ENCODE measurements at regions of chr1 and their contacts with region 1.

Region 1: GRCh38 chr1:95233737-95234500 is at the start of gene RWDD3:
- DNase-seq: peak; percentile 95 to 97 (median 96)
- ATAC-seq: peak; percentile 94 to 96 (median 95)
- H3K4me3 ChIP-seq: peak within 1 kb of the TSS; percentile 73 to 95 (median 88)
- H3K27ac ChIP-seq: peak within 1 kb of the TSS; percentile 76 to 97 (median 93)
- H3K4me1 ChIP-seq: peaks cover 0 to 81% (median 46%) of the 10 kb centered on the region in 12 donors
- H3K27me3 ChIP-seq: no peaks in the 10 kb centered on the region
- CTCF ChIP-seq: peak; percentile 67 to 99 (median 96)
- POLR2A ChIP-seq: peak in 1 of 2 donors; percentile 73
- total RNA-seq, gene RWDD3: 8.9 to 24.8 (median 14.8) TPM

Region 2: DNA sequence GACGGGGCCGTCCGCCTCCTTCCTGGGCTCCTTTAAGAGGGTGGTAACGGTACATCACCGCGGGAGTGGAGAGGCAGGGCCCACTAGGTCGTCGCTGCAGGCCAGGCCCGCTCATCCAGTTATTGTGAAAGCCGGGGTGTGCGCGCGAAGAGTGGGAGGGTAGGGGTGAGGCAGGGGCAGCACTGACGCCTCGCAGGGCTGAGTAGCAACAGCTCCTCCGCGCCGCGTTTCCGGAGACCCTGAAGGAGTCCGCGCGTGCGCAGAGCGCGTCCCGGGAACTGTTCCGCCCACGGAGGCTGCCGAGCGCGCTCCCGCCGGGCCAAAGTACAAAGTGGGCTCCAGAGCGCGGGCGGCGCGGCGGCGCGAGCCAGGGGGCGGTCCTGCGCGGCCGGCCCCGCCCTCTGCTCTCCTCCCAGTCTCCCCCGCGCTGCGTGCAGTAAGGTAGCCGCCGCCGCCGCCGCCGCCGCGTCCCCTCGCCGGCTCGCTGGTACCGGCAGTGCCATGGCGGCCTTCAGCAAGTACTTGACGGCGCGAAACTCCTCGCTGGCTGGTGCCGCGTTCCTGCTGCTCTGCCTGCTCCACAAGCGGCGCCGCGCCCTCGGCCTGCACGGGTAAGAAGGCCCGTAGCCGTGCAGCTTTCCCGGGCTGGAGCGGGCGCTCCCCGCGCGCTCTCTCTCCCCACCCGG is 815.8 kb before region 1 on chr1 and contains the start of gene ABCD3:
- intact Hi-C with region 1: loop called in 1 of 10 experiments (anchors 5 kb)
- DNase-seq: peak; percentile 98 to 99 (median 99)
- ATAC-seq: peak; percentile 92 to 98 (median 96)
- H3K4me3 ChIP-seq: peak within 1 kb of the TSS; percentile 63 to 99 (median 86)
- H3K27ac ChIP-seq: peak within 1 kb of the TSS; percentile 81 to 97 (median 94)
- H3K4me1 ChIP-seq: peaks cover 0 to 49% (median 30%) of the 10 kb centered on the region in 12 donors
- H3K27me3 ChIP-seq: no peaks in the 10 kb centered on the region
- CTCF ChIP-seq: no peak
- POLR2A ChIP-seq: peak in 1 of 2 donors; percentile 94
- total RNA-seq, gene ABCD3: 29.3 to 94.2 (median 62.1) TPM

Region 3: DNA sequence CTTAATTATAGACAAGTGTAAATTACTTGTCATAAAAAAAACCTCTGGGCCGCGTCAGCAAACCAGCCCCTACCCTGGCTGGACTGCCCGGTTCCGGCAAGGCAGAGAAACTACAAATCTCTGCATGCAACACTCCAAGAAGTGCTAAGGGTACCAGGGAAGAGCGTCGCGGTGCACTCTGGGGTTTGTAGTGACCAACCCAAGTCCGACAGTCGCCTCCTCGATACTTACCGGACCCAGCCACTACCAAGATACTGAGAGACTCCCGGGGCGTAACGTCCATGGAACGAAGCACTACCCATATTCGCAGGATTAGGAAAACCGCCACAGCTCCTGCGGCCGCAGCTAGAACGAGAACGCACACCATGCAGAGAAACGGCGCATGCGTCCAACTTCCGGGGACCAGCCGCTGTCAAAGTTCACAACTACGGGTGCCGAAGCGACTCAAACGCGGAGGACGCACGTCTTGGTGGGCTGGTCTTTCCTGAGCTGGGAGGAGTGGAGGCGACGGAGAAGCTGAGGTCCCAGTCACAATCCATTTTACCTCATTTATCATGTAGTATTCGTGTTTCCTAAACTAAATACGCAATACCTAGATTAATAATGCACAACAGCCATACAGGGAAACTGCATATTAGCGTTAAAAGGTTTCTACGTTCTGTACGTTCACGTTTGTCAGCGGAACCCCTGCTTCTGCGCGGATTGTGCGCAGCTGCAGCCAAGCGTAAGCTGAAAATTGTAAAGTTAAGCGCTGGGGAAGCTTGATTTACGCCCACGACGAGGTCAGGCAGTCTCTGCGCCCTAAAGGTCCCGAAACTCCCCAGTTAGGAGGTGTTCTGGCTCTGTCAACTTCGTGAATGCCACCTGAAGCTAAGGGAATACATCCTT is 161.1 kb before region 1 on chr1 and contains the start of gene ALG14:
- intact Hi-C with region 1: loop called in 7 of 10 experiments (anchors 2 to 5 kb)
- DNase-seq: peak; percentile 95 to 96 (median 96)
- ATAC-seq: peak; percentile 99
- H3K4me3 ChIP-seq: peak within 1 kb of the TSS; percentile 65 to 90 (median 69)
- H3K27ac ChIP-seq: peak within 1 kb of the TSS; percentile 85 to 98 (median 93)
- H3K4me1 ChIP-seq: peaks cover 0 to 17% (median 8%) of the 10 kb centered on the region in 12 donors
- H3K27me3 ChIP-seq: no peaks in the 10 kb centered on the region
- CTCF ChIP-seq: no peak
- POLR2A ChIP-seq: peak in 1 of 2 donors; percentile 58
- total RNA-seq, gene ALG14: 0.56 to 4.7 (median 3.2) TPM

Region 4: DNA sequence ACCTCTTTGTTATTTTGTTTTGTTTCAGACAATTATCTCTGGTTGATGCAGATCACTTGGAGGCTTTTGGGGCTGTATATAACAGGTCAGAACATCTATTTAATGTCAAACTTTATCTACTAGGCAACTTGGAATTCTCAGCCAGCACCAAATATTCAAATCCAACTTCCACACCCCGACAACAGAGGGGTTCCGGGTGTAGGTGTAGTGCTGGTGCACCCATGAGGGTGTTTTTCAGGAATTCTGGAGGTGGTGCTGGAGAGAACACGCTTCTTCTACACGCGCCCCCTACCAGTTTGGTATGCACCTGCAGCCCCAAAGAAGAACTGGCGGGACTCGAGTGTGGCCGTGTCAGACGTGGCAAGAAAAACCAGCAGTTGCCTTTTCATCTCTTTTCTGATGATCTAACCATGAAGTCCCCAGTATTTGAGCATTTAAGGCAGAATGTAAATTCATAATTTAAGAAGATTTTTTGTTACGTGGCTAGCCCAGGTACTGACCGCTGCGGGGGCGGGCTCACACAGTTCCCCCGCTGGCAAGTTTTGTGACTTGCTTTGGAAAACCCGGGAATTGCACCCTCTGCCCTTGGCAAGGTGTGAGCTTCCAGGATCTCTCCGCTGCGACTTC is 117.2 kb before region 1 on chr1:
- intact Hi-C with region 1: loop called in 7 of 10 experiments (anchors 1 to 10 kb)
- DNase-seq: peak; percentile 55 to 64 (median 57)
- ATAC-seq: peak; percentile 57 to 82 (median 74)
- H3K4me3 ChIP-seq: peak overlapping the region; percentile 47 to 96 (median 74)
- H3K27ac ChIP-seq: peak overlapping the region in 11 of 12 donors; percentile 62 to 91 (median 85)
- H3K4me1 ChIP-seq: peaks cover 0 to 35% (median 4%) of the 10 kb centered on the region in 12 donors
- H3K27me3 ChIP-seq: peaks cover 0 to 27% (median 0%) of the 10 kb centered on the region in 9 donors
- CTCF ChIP-seq: peak; percentile 27 to 65 (median 54)
- POLR2A ChIP-seq: no peak

Region 5: GRCh38 chr1:95197616-95198252 is 36.2 kb before region 1 on chr1:
- intact Hi-C with region 1: loop called in 2 of 10 experiments (anchors 5 kb)
- DNase-seq: no peak
- ATAC-seq: peak; percentile 24 to 78 (median 66)
- H3K4me3 ChIP-seq: peak overlapping the region in 6 of 12 donors; percentile 0 to 30 (median 14)
- H3K27ac ChIP-seq: peak overlapping the region; percentile 24 to 88 (median 71)
- H3K4me1 ChIP-seq: peaks cover 0 to 42% (median 18%) of the 10 kb centered on the region in 12 donors
- H3K27me3 ChIP-seq: no peaks in the 10 kb centered on the region
- CTCF ChIP-seq: no peak
- POLR2A ChIP-seq: no peak

Measured in heart left ventricle (tissue), 16 donors.